Transverse colon (tissue), 4 donors: ENCODE measurements at regions of chr1 and their contacts with region 1.

Region 1: GRCh38 chr1:165073185-165074007 is 283.1 kb downstream of the LMX1A start:
- DNase-seq: no peak
- H3K4me3 ChIP-seq: no peak overlapping the region
- H3K27ac ChIP-seq: no peak overlapping the region
- H3K4me1 ChIP-seq: peaks cover 0 to 27% (median 13%) of the 10 kb centered on the region in 4 donors
- H3K27me3 ChIP-seq: no peaks in the 10 kb centered on the region
- CTCF ChIP-seq: peak; percentile 68 to 82 (median 76)
- EP300 ChIP-seq: no peak
- POLR2A ChIP-seq: no peak

Region 2: DNA sequence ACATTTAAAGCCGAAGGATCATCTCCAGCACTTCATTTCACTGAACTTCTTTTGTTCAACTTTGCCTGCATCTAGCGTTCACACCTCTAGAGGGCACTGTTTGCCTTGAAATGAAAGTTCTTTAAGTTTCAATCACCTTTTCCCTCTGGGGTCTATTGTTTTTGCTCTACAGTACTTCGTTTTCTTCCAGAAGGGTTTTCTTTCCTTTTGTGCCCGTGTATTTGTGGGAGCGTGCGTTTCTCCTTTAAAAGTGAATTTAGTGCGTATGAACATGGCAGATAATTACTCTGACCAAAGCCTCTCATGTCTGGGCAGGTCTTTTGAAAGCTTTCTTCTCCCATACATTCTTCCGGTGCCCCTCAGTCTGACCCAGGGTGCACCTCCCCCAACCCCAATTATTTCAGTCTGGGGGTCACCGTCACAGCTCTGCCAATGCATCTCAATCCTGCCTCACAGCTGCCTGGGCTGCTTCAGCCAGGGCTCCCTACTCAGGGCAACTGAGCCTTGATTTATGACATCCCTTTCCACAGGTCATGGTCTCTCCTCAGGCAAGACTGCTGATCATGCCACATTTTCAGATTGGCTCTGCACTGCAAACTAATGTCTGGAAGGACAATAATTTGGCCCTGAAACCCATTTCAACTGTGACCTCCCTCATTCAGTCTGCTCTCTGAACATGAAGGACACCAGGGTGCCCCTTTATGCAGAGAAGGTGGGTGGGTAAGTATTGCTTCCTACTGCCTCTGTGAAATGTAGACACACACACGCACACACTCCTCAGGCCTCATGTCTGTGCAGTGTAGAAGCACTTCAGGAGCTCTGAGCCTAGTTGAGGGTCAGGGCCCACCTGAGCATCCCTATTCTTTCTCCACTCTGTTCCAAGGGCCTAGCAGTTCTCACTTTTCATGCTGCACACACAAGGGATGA is 1663.1 kb before region 1 on chr1:
- in situ Hi-C with region 1: loop called in 1 of 4 experiments (anchors 25 kb)
- intact Hi-C with region 1: no loop called
- DNase-seq: peak; percentile 49
- H3K4me3 ChIP-seq: no peak overlapping the region
- H3K27ac ChIP-seq: no peak overlapping the region
- H3K4me1 ChIP-seq: peaks cover 0 to 9% (median 7%) of the 10 kb centered on the region in 4 donors
- H3K27me3 ChIP-seq: no peaks in the 10 kb centered on the region
- CTCF ChIP-seq: peak; percentile 65 to 81 (median 72)
- EP300 ChIP-seq: no peak
- POLR2A ChIP-seq: no peak

Region 3: GRCh38 chr1:163528710-163529348 is 1544.6 kb before region 1 on chr1:
- in situ Hi-C with region 1: loop called (anchors 10 to 25 kb)
- intact Hi-C with region 1: loop called (anchors 2 kb)
- DNase-seq: peak; percentile 16
- H3K4me3 ChIP-seq: no peak overlapping the region
- H3K27ac ChIP-seq: no peak overlapping the region
- H3K4me1 ChIP-seq: no peaks in the 10 kb centered on the region
- H3K27me3 ChIP-seq: no peaks in the 10 kb centered on the region
- CTCF ChIP-seq: peak; percentile 52 to 64 (median 58)
- EP300 ChIP-seq: no peak
- POLR2A ChIP-seq: no peak

Region 4: DNA sequence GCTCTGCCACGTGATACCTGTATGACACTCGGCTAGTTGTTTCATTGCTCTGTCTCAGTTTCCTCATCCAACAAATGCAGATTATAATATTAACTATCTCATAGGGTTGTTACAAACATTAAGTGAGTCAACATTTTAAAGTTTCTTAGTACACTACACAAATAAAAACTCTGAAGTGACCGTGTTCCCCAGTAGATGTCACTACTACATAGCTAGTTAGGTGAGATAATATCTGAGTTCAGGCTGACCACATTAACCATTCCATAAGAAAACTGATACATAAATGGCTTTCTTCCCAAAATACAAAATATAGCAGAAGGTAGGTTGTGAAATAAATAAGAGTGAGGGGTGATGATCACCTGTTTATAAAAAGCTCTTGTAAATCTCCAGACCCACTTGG is 1537.6 kb before region 1 on chr1:
- in situ Hi-C with region 1: loop called (anchors 10 to 25 kb)
- intact Hi-C with region 1: loop called (anchors 2 kb)
- DNase-seq: no peak
- H3K4me3 ChIP-seq: no peak overlapping the region
- H3K27ac ChIP-seq: no peak overlapping the region
- H3K4me1 ChIP-seq: no peaks in the 10 kb centered on the region
- H3K27me3 ChIP-seq: no peaks in the 10 kb centered on the region
- CTCF ChIP-seq: peak in 4 of 5 experiments; percentile 15 to 36 (median 16)
- EP300 ChIP-seq: no peak
- POLR2A ChIP-seq: no peak

Region 5: DNA sequence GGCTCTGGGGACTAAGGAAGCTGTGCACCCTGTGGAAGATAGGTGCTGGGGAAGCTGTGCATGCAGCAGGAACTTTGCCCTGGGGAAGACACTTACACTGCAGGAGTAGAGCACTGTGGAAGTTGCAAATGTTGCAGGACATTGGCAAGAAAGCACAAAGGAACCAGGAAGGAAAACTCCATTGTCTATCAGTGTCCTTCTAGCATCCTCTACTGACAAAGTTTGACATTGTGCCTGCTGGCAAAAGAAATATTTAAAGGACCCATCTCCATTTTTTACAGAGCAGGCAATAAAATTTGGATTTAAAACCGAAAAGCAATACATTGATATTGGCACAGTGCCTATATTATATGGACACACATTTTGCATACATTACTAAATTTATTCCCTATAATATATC is 120.3 kb before region 1 on chr1:
- in situ Hi-C with region 1: no loop called
- intact Hi-C with region 1: loop called (anchors 10 kb)
- DNase-seq: no peak
- H3K4me3 ChIP-seq: no peak overlapping the region
- H3K27ac ChIP-seq: no peak overlapping the region
- H3K4me1 ChIP-seq: no peaks in the 10 kb centered on the region
- H3K27me3 ChIP-seq: no peaks in the 10 kb centered on the region
- CTCF ChIP-seq: no peak
- EP300 ChIP-seq: no peak
- POLR2A ChIP-seq: no peak

Region 6: DNA sequence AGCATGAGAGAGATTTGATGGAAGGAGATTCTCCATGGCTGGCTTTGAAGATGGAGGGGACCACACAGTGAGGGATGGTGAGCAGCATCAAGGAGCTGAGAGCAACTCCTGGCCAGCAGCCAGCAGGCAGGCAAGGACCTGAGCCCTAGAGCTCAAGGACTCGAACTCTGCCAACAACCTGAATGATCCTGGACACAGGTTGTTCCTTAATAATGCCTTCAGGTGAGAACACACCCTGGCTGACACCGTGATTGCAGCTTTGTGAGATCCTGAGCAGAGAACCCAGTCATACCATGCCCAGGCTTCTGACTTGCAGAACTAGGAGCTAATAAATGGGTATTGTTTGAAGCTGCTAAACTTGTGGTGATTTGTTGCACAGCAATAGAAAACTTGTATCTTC is 100.0 kb after region 1 on chr1:
- in situ Hi-C with region 1: no loop called
- intact Hi-C with region 1: no loop called
- DNase-seq: no peak
- H3K4me3 ChIP-seq: no peak overlapping the region
- H3K27ac ChIP-seq: no peak overlapping the region
- H3K4me1 ChIP-seq: no peaks in the 10 kb centered on the region
- H3K27me3 ChIP-seq: no peaks in the 10 kb centered on the region
- CTCF ChIP-seq: no peak
- EP300 ChIP-seq: no peak
- POLR2A ChIP-seq: no peak